Ovary (tissue), 10 donors: ENCODE measurements at regions of chr2 and their contacts with region 1.

Region 1: DNA sequence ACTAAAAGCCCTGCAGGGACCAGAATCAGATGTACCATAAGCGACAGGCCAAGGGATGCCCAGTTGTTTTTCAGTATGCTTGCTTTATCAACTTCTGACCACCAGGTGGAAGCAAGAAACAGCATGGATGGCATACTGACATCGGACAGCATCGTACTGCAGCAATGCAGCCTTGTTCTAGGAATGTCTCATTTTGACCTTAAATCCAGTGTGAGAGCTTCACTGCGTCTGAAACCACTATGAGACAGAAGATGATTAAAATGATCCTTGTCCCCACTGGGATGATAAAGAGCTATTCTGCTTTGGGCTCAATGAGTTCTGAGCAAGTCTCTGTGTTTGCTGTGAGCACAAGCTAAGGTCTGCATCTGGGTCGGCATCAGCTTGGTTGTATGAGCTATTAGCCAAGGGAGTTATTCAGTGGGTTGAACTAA is 54.3 kb downstream of the CDK15 start:
- DNase-seq: peak in 4 of 5 donors; percentile 30 to 53 (median 42)
- H3K4me3 ChIP-seq: no peak overlapping the region
- H3K27ac ChIP-seq: no peak overlapping the region
- H3K4me1 ChIP-seq: peaks cover 4% of the 10 kb centered on the region
- H3K27me3 ChIP-seq: no peaks in the 10 kb centered on the region
- CTCF ChIP-seq: peak; percentile 41 to 82 (median 67)
- EP300 ChIP-seq: no peak
- POLR2A ChIP-seq: no peak

Region 2: GRCh38 chr2:201546576-201546975 is 314.1 kb before region 1 on chr2:
- intact Hi-C with region 1: no loop called
- DNase-seq: no peak
- H3K4me3 ChIP-seq: no peak overlapping the region
- H3K27ac ChIP-seq: no peak overlapping the region
- H3K4me1 ChIP-seq: no peaks in the 10 kb centered on the region
- H3K27me3 ChIP-seq: no peaks in the 10 kb centered on the region
- CTCF ChIP-seq: no peak
- EP300 ChIP-seq: no peak
- POLR2A ChIP-seq: no peak

Region 3: DNA sequence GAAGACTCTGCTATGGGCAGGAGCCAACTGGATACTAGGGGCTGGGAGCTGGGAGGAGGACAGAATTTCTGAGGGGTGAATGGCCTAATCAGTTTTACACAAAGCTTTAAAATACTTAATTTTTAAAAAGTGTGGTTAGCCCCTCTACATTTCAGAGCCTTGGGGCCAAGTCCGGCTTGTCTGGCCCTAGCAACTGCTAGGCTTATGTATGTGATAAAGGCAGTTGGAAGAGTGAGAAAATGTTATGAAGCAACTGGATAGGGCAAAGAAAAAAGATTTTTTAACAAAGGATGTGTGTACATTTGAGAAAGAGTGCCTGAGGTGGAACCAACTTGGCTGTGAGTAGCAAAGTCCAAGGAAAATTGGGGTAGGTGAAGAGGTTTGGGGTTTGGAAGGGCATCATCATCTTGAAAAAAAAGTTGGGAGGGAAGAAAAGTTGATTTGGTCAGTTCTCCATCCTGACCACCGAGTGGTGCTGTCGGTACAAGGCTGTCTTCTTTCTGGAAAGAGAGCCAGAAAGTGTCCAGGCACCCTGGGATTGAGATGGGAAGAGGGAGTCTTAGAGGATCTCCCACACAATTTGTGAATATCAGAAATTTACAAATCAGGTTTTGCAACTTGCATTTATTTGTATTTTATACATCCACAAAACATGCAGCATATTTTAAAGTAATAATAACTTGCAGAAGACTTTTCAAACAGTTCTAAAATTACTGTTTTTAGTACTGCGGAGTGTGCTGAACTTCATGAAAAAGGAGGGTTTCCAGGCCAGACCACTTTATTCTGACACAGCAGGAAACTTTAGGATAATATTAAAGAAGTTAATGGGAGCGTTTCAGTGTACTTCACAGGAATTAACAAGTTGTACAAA is 64.8 kb before region 1 on chr2:
- intact Hi-C with region 1: loop called in 2 of 4 experiments (anchors 5 to 10 kb)
- DNase-seq: peak in 4 of 5 donors; percentile 45 to 47 (median 46)
- H3K4me3 ChIP-seq: no peak overlapping the region
- H3K27ac ChIP-seq: no peak overlapping the region
- H3K4me1 ChIP-seq: no peaks in the 10 kb centered on the region
- H3K27me3 ChIP-seq: no peaks in the 10 kb centered on the region
- CTCF ChIP-seq: peak; percentile 17 to 65 (median 65)
- EP300 ChIP-seq: no peak
- POLR2A ChIP-seq: no peak

Region 4: GRCh38 chr2:201807452-201807999 is 53.1 kb before region 1 on chr2:
- intact Hi-C with region 1: loop called in 1 of 4 experiments (anchors 10 kb)
- DNase-seq: peak; percentile 32 to 70 (median 51)
- H3K4me3 ChIP-seq: no peak overlapping the region
- H3K27ac ChIP-seq: peak overlapping the region; percentile 9 to 67
- H3K4me1 ChIP-seq: peaks cover 7% of the 10 kb centered on the region
- H3K27me3 ChIP-seq: no peaks in the 10 kb centered on the region
- CTCF ChIP-seq: no peak
- EP300 ChIP-seq: no peak
- POLR2A ChIP-seq: no peak

Region 5: DNA sequence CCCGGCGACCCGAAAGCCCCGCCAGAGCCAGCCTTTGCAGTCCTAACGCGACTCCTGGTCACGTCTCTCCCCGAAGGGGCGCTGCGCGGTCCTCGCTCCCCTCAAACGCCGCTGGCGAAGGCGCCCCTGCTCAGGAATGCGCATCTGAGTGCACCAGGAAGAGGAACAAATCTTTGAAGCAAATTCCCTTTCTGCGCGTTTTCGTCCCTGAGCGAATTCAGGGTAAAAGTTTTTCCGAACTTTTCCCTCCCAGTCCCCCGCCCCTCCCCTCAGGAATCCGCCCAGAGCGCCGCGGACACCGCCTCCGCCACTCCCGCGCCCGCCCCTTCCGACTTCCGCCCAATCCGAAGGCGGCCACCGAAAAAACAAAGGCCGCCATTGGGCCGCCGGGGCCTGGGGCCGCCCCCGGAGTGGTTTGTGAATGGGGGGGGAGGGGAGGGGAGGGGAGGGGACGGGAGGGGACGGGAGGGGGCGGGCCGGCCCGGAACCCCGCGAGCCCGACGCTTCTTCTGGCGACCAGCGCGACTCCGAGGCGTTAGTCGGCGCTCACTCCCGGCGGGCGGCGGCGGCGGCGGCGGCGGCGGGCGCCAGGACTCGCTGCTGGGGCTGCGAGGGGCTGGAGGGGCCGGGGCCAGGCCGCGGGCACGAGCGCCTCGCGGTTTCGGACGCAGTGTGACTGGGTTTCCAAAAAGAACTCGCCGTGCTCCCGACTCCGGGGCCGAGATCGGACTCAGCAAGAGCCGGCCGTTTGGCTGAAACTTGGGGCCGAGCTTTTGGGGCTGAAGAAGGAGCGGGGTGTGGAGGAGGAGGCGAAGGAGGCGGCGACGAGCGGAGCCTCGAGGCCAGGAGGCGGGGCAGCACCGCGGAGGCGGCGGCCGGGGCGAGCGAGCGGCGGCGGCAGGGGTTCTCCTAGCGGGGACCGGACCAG is 172.9 kb after region 1 on chr2 and contains the start of gene FZD7:
- intact Hi-C with region 1: loop called in 3 of 4 experiments (anchors 5 to 10 kb)
- DNase-seq: peak; percentile 95 to 97 (median 96)
- H3K4me3 ChIP-seq: peak within 1 kb of the TSS; percentile 77
- H3K27ac ChIP-seq: peak within 1 kb of the TSS; percentile 93 to 95
- H3K4me1 ChIP-seq: peaks cover 14% of the 10 kb centered on the region
- H3K27me3 ChIP-seq: no peaks in the 10 kb centered on the region
- CTCF ChIP-seq: no peak
- EP300 ChIP-seq: no peak
- POLR2A ChIP-seq: peak; percentile 72
- total RNA-seq, gene FZD7: 18.4 to 56.3 (median 35.9) TPM

Region 6: DNA sequence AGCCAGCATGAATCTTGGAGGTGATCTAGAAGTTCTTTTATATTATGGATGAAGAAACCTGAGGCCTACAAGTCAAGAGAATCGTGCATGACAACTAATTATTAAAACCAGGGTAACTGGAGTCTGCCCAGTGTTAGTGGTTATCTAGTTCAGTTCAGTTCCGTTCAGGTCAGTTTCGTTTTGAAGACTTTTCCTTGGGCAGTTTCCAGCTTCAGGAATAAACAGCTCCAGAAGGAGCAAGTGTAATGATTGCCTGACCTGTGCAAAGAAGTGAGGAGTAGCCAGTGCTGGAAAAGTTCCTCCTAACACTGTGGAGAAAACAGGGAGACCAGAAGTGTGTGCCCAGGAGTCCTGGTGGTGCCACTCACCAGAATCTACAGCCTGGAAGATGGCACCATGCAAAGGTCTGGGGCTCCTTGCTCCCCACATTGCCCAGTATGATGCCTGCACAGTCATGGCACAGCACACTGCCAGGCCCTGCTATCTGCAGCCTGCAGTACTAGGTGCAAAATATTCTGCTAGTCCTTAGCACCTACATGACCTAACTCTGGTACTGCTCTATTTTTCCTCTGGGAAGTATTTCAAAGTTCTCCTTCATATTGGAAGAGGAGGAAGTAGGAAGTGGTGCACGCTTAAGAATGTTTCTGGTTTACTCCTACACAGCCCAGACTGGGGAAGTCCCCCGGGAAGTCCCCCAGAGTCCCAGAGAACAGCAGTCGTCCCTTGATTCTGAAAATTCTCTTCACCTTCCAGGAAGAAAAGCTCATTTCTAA is 312.0 kb after region 1 on chr2:
- intact Hi-C with region 1: loop called (anchors 2 to 10 kb)
- DNase-seq: peak in 1 of 5 donors; percentile 14
- H3K4me3 ChIP-seq: no peak overlapping the region
- H3K27ac ChIP-seq: peak overlapping the region in 1 of 2 donors; percentile 8
- H3K4me1 ChIP-seq: peaks cover 3% of the 10 kb centered on the region
- H3K27me3 ChIP-seq: no peaks in the 10 kb centered on the region
- CTCF ChIP-seq: no peak
- EP300 ChIP-seq: no peak
- POLR2A ChIP-seq: no peak

Region 7: DNA sequence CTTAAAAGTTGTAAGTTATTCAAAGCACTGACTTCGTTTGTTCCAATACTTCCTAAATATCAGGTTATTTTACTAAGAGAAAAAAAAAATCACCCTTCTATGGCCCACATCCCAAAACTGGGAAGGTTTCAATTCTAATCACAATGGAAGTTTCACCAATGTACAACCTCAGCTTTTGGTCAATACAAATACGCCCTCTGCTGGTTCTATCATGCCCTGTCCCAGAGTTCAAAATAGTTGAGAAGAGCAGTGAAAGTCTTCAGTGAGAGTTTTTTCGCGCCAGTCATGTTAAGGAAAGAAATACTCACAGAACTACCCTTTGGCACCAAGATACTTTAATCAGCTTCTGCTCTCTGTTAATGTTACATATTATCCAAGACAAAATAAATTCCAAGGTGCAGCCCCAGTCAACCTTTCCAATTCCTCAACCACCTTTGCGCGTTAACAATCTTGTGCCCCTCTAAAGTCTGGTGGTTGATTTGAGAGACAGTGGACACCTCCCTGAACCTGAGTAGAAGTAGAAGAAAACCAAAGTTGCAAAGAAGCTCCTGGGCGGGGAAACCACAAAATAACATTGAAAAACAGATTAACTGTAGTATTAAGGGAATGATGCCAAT is 317.8 kb after region 1 on chr2:
- intact Hi-C with region 1: loop called (anchors 2 to 10 kb)
- DNase-seq: peak in 4 of 5 donors; percentile 44 to 77 (median 48)
- H3K4me3 ChIP-seq: no peak overlapping the region
- H3K27ac ChIP-seq: no peak overlapping the region
- H3K4me1 ChIP-seq: no peaks in the 10 kb centered on the region
- H3K27me3 ChIP-seq: no peaks in the 10 kb centered on the region
- CTCF ChIP-seq: peak; percentile 51 to 78 (median 71)
- EP300 ChIP-seq: no peak
- POLR2A ChIP-seq: no peak